CD8-positive, alpha-beta memory T cell (primary cell): ENCODE measurements at regions of chr5 and their contacts with region 1.

Region 1: DNA sequence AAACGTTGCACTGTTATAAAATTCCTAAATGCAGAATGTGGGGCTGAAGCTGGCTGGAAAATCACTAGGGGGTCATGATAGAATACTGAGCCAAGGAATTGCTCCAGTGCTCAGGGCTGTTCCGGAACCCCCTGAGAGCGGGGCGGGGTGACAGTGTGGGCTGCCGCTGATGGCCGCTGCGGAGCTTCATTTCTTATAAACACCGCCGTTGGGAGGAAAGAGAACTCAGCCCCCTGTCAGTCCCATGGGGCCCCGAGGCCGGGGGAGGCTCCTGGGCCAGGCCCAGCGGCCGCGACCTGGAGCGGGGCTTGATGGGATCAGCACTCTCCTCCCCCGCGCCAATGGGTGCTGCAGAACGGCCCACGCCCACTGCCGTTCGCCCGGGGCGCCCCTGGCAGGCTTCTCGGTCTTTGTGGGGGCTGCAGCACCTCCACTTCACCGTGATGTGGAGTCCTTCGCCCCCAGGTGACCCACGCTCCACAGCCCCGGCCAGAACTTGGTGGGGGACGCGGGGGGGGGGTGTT is 5.2 kb upstream of the IRF1 start:
- DNase-seq: peak; percentile 50 to 76 (median 63)
- H3K4me3 ChIP-seq: peak overlapping the region; percentile 79
- H3K4me3 Mint-ChIP-seq: peak overlapping the region; percentile 88 to 99 (median 97)
- H3K27ac ChIP-seq: peak overlapping the region; percentile 82
- H3K27ac Mint-ChIP-seq: peak overlapping the region; percentile 96 to 100 (median 98)
- H3K4me1 ChIP-seq: peaks cover 72% of the 10 kb centered on the region
- H3K4me1 Mint-ChIP-seq: peaks cover 67 to 84% (median 78%) of the 10 kb centered on the region in 3 donors
- H3K27me3 ChIP-seq: no peaks in the 10 kb centered on the region
- H3K27me3 Mint-ChIP-seq: peaks cover 0 to 2% of the 10 kb centered on the region in 2 donors

Region 2: GRCh38 chr5:132369474-132370180 is 126.1 kb before region 1 on chr5 and contains the start of gene SLC22A5:
- CTCF ChIA-PET with region 1: interaction called, 16 read pairs
- POLR2A ChIA-PET with region 1: interaction called, 12 read pairs
- DNase-seq: peak; percentile 56 to 81 (median 70)
- H3K4me3 ChIP-seq: peak within 1 kb of the TSS; percentile 74
- H3K4me3 Mint-ChIP-seq: peak within 1 kb of the TSS; percentile 67 to 92 (median 83)
- H3K27ac ChIP-seq: peak within 1 kb of the TSS; percentile 69
- H3K27ac Mint-ChIP-seq: peak within 1 kb of the TSS in 7 of 8 donors; percentile 4 to 95 (median 70)
- H3K4me1 ChIP-seq: peaks cover 27% of the 10 kb centered on the region
- H3K4me1 Mint-ChIP-seq: peaks cover 17 to 30% (median 29%) of the 10 kb centered on the region in 3 donors
- H3K27me3 ChIP-seq: no peaks in the 10 kb centered on the region
- H3K27me3 Mint-ChIP-seq: no peaks in the 10 kb centered on the region
- total RNA-seq, gene SLC22A5: 5.2 to 5.9 TPM

Region 3: GRCh38 chr5:132419502-132420468 is 75.9 kb before region 1 on chr5:
- CTCF ChIA-PET with region 1: interaction called, 112 read pairs
- POLR2A ChIA-PET with region 1: interaction called, 85 read pairs
- DNase-seq: peak; percentile 42 to 77 (median 60)
- H3K4me3 ChIP-seq: no peak overlapping the region
- H3K4me3 Mint-ChIP-seq: peak overlapping the region; percentile 76 to 91 (median 78)
- H3K27ac ChIP-seq: peak overlapping the region; percentile 12
- H3K27ac Mint-ChIP-seq: peak overlapping the region; percentile 84 to 99 (median 98)
- H3K4me1 ChIP-seq: peaks cover 97% of the 10 kb centered on the region
- H3K4me1 Mint-ChIP-seq: peaks cover 90 to 98% (median 97%) of the 10 kb centered on the region in 3 donors
- H3K27me3 ChIP-seq: no peaks in the 10 kb centered on the region
- H3K27me3 Mint-ChIP-seq: no peaks in the 10 kb centered on the region

Region 4: GRCh38 chr5:132456296-132457001 is 39.3 kb before region 1 on chr5:
- CTCF ChIA-PET with region 1: interaction called, 63 read pairs
- POLR2A ChIA-PET with region 1: interaction called, 99 read pairs
- DNase-seq: peak; percentile 55 to 85 (median 78)
- H3K4me3 ChIP-seq: peak overlapping the region; percentile 47
- H3K4me3 Mint-ChIP-seq: peak overlapping the region; percentile 37 to 86 (median 81)
- H3K27ac ChIP-seq: peak overlapping the region; percentile 93
- H3K27ac Mint-ChIP-seq: peak overlapping the region; percentile 98 to 100 (median 100)
- H3K4me1 ChIP-seq: peaks cover 94% of the 10 kb centered on the region
- H3K4me1 Mint-ChIP-seq: peaks cover 92 to 97% (median 95%) of the 10 kb centered on the region in 3 donors
- H3K27me3 ChIP-seq: no peaks in the 10 kb centered on the region
- H3K27me3 Mint-ChIP-seq: peaks cover 0 to 2% of the 10 kb centered on the region in 2 donors

Region 5: DNA sequence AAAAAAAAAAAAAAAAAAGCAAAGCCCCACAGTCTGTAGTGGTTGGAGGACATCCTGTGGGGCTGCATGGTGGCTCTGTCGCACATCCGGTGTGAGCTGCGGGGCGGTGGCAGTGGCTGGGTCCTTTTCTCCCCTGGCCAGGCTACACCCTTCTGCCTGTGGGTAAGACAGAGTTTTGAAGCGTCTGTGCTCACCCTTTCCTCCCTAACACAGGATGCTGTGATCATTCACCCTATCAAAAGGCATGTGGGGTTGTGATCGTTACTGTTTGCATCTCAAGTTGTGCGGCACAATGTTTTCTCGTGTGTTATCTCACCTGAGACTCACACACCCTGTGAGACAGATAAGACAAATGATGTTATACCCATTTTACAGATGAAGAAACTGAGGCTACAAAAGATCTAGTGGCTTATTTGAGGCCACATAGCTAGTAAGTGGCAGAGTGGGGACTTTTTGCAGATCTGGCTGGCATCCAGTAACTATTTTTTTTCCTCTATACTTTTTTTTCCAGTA is 22.7 kb before region 1 on chr5:
- CTCF ChIA-PET with region 1: interaction called, 222 read pairs
- POLR2A ChIA-PET with region 1: interaction called, 104 read pairs
- DNase-seq: peak; percentile 81 to 96 (median 89)
- H3K4me3 ChIP-seq: no peak overlapping the region
- H3K4me3 Mint-ChIP-seq: peak overlapping the region; percentile 39 to 86 (median 64)
- H3K27ac ChIP-seq: peak overlapping the region; percentile 62
- H3K27ac Mint-ChIP-seq: peak overlapping the region; percentile 93 to 99 (median 96)
- H3K4me1 ChIP-seq: peaks cover 86% of the 10 kb centered on the region
- H3K4me1 Mint-ChIP-seq: peaks cover 87 to 99% (median 97%) of the 10 kb centered on the region in 3 donors
- H3K27me3 ChIP-seq: no peaks in the 10 kb centered on the region
- H3K27me3 Mint-ChIP-seq: peaks cover 0 to 9% of the 10 kb centered on the region in 2 donors